Gastrocnemius medialis (tissue), 4 donors: ENCODE measurements at regions of chr4 and their contacts with region 1.

Region 1: DNA sequence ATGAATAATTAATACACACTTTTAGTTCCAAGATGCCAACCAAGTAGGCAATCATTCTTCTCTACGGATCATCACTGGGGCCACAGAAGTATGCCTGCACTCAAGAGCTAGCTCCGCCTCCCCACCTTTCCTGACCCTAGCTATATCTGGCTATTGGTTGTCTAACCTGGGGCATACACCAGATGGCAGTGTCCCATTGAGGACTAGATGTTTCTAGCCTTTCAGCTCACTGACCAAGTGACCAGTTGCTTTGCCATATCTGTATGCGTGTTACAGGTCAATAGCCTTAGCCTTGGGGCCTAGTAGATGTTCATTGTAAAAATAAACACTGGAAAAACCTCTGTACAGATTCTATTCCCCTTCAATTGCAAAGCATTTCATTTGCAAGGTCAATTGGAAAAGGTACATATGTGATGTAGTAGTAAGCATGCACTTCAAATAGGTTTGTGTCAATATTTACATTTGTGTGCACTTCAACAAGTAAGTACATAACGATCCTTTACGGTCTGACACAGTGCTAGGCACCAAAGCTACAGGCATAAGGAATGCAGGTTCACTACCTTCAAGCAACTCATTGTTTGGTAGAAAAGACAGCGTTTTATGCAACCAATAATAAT is 521.7 kb downstream of the PPARGC1A start:
- DNase-seq: peak; percentile 59 to 78
- ATAC-seq: peak; percentile 77 to 83
- H3K4me3 ChIP-seq: no peak overlapping the region
- H3K27ac ChIP-seq: peak overlapping the region; percentile 73 to 85 (median 80)
- H3K4me1 ChIP-seq: peaks cover 24 to 30% of the 10 kb centered on the region in 2 donors
- H3K27me3 ChIP-seq: no peaks in the 10 kb centered on the region
- CTCF ChIP-seq: peak; percentile 72 to 77 (median 74)
- POLR2A ChIP-seq: no peak

Region 2: DNA sequence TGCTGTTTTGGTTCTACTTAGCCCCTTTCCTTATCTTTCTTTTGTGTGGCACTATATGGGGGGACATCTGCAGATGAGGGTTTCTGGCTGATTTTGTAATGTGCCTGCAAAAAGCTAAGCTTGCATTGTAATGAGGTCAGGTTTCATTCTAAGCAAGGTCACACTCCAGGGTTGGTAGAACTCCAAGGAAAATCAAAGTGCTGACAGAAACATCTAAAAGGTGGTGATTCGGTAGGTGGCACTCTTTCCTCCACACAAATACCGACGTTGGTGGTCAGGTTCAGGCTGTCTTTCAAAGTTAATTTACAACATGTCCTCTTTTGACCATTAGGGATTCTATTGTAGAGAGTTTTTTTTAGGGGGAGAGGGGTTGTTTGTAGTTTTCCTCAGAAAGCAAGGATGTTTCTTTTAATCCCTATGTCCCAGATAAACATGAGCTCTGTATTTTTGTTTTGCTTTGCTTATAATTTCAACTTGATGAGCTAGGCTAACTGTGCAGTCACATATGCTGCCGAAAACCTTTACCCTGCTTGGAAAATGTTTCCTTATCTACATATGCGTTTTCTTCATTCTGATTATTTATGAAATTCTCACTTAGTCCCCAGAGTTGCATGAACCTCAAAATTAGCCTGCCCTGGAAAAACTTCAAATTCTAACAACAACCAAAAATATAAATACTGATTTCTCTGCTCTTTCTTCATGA is 87.4 kb after region 1 on chr4:
- in situ Hi-C with region 1: no loop called
- intact Hi-C with region 1: loop called (anchors 1 kb)
- DNase-seq: peak; percentile 24 to 45
- ATAC-seq: peak; percentile 96
- H3K4me3 ChIP-seq: peak overlapping the region in 1 of 4 donors; percentile 19
- H3K27ac ChIP-seq: peak overlapping the region in 2 of 4 donors; percentile 31 to 66
- H3K4me1 ChIP-seq: peaks cover 19 to 30% of the 10 kb centered on the region in 2 donors
- H3K27me3 ChIP-seq: no peaks in the 10 kb centered on the region
- CTCF ChIP-seq: peak in 2 of 5 experiments; percentile 5 to 33
- POLR2A ChIP-seq: no peak

Region 3: DNA sequence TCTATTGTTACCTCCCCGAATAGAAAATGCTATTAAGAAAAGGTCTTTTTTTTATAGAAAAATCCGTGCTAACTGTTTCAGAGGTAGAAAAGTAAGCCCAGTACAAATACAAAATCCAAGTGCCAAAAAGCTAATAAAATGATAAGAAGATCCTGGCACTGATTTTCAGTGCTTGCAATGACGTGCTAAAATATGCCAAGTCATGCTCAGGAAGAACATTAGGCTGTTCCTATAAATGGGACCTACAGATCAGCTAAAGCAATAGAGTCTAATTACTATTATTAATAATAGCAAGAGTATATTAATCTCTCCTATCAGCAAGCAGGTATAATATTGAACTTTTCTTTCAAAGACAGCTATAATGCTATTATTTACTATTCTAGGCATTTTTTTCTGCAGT is 215.8 kb after region 1 on chr4:
- in situ Hi-C with region 1: loop called in 1 of 4 experiments (anchors 10 kb)
- intact Hi-C with region 1: loop called (anchors 10 kb)
- DNase-seq: no peak
- ATAC-seq: no peak
- H3K4me3 ChIP-seq: no peak overlapping the region
- H3K27ac ChIP-seq: no peak overlapping the region
- H3K4me1 ChIP-seq: peaks cover 17 to 19% of the 10 kb centered on the region in 2 donors
- H3K27me3 ChIP-seq: no peaks in the 10 kb centered on the region
- CTCF ChIP-seq: no peak
- POLR2A ChIP-seq: no peak

Region 4: GRCh38 chr4:23614284-23614892 is 246.2 kb after region 1 on chr4:
- in situ Hi-C with region 1: no loop called
- intact Hi-C with region 1: loop called (anchors 10 kb)
- DNase-seq: peak in 1 of 2 donors; percentile 26
- ATAC-seq: peak in 1 of 2 donors; percentile 51
- H3K4me3 ChIP-seq: no peak overlapping the region
- H3K27ac ChIP-seq: no peak overlapping the region
- H3K4me1 ChIP-seq: no peaks in the 10 kb centered on the region
- H3K27me3 ChIP-seq: no peaks in the 10 kb centered on the region
- CTCF ChIP-seq: peak in 1 of 5 experiments; percentile 27
- POLR2A ChIP-seq: no peak

Region 5: GRCh38 chr4:23680671-23681518 is 312.7 kb after region 1 on chr4:
- in situ Hi-C with region 1: loop called in 1 of 4 experiments (anchors 25 kb)
- intact Hi-C with region 1: no loop called
- DNase-seq: no peak
- ATAC-seq: no peak
- H3K4me3 ChIP-seq: no peak overlapping the region
- H3K27ac ChIP-seq: no peak overlapping the region
- H3K4me1 ChIP-seq: no peaks in the 10 kb centered on the region
- H3K27me3 ChIP-seq: no peaks in the 10 kb centered on the region
- CTCF ChIP-seq: peak in 1 of 5 experiments; percentile 2
- POLR2A ChIP-seq: no peak

Region 6: GRCh38 chr4:23717528-23718248 is 349.5 kb after region 1 on chr4:
- in situ Hi-C with region 1: no loop called
- intact Hi-C with region 1: loop called (anchors 5 kb)
- DNase-seq: no peak
- ATAC-seq: peak in 1 of 2 donors; percentile 53
- H3K4me3 ChIP-seq: no peak overlapping the region
- H3K27ac ChIP-seq: no peak overlapping the region
- H3K4me1 ChIP-seq: no peaks in the 10 kb centered on the region
- H3K27me3 ChIP-seq: no peaks in the 10 kb centered on the region
- CTCF ChIP-seq: peak in 3 of 5 experiments; percentile 11 to 36 (median 26)
- POLR2A ChIP-seq: no peak

Region 7: DNA sequence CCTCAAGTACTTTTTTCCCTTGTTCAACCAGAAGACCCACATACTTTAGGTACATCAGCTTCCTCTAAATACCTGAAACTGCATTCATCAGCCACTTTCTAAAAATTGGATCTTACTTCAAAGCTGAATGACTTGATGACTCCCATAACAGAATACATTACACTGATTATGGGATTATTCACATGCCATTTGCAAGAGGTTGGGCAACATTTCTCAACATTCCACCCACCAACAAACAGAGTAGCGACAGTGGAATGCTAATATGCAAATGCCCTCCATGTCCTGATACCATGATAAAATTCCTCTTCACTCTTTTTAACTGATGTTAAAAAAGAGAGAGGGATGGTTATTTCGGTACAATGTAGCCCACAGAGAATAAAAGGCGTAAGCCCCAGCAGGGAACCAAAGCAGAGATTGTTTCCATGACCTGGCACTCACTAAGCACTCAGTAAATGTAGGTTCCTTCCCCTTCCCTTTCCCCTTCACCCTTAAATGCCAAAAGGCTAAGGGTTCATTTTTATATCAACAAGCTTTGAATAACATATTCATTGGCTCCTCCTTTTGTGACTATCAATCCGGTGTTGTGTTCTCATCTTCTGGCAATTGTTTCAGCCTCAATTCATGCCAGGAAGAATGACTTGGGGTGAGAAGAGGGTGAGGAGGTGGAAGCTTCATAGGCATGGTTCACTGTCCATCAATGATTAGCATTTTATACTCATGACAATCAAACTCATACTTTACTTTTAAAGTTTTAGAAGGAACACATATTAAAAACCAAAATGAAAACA is 899.0 kb after region 1 on chr4:
- in situ Hi-C with region 1: loop called in 1 of 4 experiments (anchors 25 kb)
- intact Hi-C with region 1: no loop called
- DNase-seq: no peak
- ATAC-seq: no peak
- H3K4me3 ChIP-seq: no peak overlapping the region
- H3K27ac ChIP-seq: peak overlapping the region in 2 of 4 donors; percentile 79 to 83
- H3K4me1 ChIP-seq: peaks cover 18 to 36% of the 10 kb centered on the region in 2 donors
- H3K27me3 ChIP-seq: no peaks in the 10 kb centered on the region
- CTCF ChIP-seq: no peak
- POLR2A ChIP-seq: no peak